Pancreas (tissue), 10 donors: ENCODE measurements at regions of chr7 and their contacts with region 1.

Region 1: DNA sequence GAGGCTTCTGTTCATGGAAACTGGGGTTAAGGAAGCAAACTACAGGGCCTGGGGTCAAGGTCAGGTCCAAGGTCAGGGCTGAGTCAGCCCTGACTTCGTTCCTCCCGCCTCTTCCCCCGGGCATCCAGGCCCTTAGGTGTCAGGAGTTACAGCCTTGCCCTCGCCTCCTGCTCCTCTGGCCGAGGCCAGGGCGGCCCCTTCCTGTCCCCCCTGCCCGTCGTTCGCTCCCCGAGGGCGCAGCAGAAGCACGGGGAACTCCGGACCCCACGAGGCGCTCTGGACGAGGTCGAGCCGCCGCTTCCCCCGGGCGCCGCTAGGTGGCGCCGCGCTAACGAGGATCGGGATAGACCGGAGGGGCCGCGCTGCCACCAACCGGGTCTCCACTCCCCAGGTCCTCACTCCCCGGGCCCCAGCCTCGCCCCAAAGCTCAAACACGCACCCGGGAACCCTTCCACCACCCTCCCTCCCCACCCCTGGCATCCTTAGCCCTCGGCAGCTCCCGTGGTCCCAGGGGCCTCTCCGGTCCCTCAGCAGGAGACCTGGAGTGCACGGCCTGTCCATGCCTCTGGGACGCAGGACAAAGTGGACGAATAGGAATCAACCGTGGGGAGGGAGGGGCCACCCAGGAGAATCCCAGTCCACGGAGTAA is 59.2 kb upstream of the MYL10 start:
- DNase-seq: peak; percentile 54 to 97 (median 79)
- ATAC-seq: peak; percentile 84 to 94 (median 92)
- H3K4me3 ChIP-seq: peak overlapping the region in 2 of 4 donors; percentile 13 to 28
- H3K27ac ChIP-seq: no peak overlapping the region
- H3K4me1 ChIP-seq: peaks cover 0 to 7% (median 0%) of the 10 kb centered on the region in 3 donors
- H3K27me3 ChIP-seq: no peaks in the 10 kb centered on the region
- CTCF ChIP-seq: peak; percentile 90 to 98 (median 96)

Region 2: GRCh38 chr7:101804967-101805366 is 116.7 kb after region 1 on chr7:
- intact Hi-C with region 1: loop called in 1 of 3 experiments (anchors 10 kb)
- DNase-seq: peak in 2 of 6 donors; percentile 43 to 52
- ATAC-seq: peak; percentile 77 to 89 (median 84)
- H3K4me3 ChIP-seq: no peak overlapping the region
- H3K27ac ChIP-seq: no peak overlapping the region
- H3K4me1 ChIP-seq: no peaks in the 10 kb centered on the region
- H3K27me3 ChIP-seq: peaks cover 0 to 7% (median 2%) of the 10 kb centered on the region in 4 donors
- CTCF ChIP-seq: peak; percentile 23 to 46 (median 40)

Region 3: DNA sequence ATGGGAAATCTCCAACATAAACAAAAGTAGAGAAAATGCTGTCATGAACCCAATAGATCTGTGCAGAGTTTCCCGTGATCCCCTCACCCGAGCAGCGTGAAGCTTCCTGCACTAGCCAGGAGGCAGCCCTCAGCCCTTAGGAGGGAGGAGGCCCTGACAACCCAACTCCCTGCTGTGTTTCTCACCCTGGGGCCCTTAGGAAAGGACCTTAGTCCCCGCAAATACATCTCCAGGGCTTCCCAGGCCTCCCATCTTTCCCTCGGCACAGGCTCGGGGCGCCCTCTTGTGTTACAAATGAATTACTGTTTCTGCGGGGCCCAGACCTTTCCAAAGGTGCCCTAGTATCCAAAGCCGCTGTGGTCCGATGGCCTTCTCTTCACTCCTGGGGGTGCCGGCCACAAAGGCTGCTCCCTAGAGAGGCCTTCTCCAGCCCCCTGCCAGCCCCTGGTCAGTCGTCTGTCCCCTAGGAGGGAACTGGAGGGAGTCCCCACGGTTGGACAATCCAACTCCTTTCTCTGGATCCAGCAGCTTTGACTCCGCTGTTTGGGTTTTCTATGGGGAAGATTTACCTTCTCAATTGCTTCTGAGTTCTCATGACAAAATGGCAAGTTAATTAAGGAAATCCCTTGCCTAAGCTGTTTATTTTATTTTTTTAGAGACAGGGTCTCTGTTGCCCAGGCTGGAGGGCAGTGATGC is 548.4 kb after region 1 on chr7:
- intact Hi-C with region 1: loop called in 1 of 3 experiments (anchors 10 kb)
- DNase-seq: peak; percentile 29 to 81 (median 66)
- ATAC-seq: peak; percentile 36 to 79 (median 62)
- H3K4me3 ChIP-seq: no peak overlapping the region
- H3K27ac ChIP-seq: no peak overlapping the region
- H3K4me1 ChIP-seq: peaks cover 0 to 6% (median 0%) of the 10 kb centered on the region in 3 donors
- H3K27me3 ChIP-seq: no peaks in the 10 kb centered on the region
- CTCF ChIP-seq: peak; percentile 55 to 84 (median 66)